Thyroid gland (tissue), 4 donors: ENCODE measurements at regions of chr13 and their contacts with region 1.

Region 1: DNA sequence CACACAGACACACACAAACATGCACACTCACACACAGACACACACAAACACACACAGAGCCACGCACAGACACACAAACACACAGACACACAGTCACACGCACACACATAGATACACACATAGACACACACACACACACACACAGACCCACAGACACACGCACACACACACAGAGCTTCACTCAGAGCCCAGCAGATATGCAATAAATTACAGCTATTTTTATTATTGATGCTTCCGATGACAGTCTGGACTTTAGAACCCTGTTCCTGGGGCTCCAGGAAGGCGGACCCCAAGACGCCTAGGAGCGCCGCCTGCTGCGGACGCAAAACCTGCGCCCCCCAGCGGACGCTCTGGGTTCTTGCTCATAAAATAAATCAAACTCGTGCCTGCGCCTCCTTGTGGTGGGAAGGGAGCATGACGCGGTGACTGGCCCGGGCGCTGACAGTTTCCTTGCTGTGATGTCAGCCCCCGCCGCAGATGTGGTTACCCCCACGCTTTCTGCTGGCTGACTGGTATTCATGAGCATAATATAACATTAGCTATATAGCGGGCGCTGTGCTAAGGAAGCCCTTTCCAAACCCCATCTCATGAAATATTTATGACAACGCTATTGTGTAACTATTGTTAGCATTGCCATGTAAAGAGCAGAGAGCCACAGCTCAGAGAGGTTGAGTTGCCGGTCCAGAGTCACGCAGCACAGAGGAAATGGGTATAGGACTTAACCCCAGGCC is 64.4 kb upstream of the TM9SF2 start:
- DNase-seq: peak; percentile 75 to 84
- H3K4me3 ChIP-seq: no peak overlapping the region
- H3K27ac ChIP-seq: no peak overlapping the region
- H3K4me1 ChIP-seq: no peaks in the 10 kb centered on the region
- H3K27me3 ChIP-seq: no peaks in the 10 kb centered on the region
- CTCF ChIP-seq: peak; percentile 98 to 100 (median 99)
- POLR2A ChIP-seq: no peak

Region 2: GRCh38 chr13:99176309-99177276 is 260.3 kb before region 1 on chr13:
- intact Hi-C with region 1: loop called (anchors 5 kb)
- DNase-seq: peak; percentile 75 to 83
- H3K4me3 ChIP-seq: no peak overlapping the region
- H3K27ac ChIP-seq: no peak overlapping the region
- H3K4me1 ChIP-seq: no peaks in the 10 kb centered on the region
- H3K27me3 ChIP-seq: no peaks in the 10 kb centered on the region
- CTCF ChIP-seq: peak; percentile 82 to 92 (median 90)
- POLR2A ChIP-seq: no peak

Region 3: DNA sequence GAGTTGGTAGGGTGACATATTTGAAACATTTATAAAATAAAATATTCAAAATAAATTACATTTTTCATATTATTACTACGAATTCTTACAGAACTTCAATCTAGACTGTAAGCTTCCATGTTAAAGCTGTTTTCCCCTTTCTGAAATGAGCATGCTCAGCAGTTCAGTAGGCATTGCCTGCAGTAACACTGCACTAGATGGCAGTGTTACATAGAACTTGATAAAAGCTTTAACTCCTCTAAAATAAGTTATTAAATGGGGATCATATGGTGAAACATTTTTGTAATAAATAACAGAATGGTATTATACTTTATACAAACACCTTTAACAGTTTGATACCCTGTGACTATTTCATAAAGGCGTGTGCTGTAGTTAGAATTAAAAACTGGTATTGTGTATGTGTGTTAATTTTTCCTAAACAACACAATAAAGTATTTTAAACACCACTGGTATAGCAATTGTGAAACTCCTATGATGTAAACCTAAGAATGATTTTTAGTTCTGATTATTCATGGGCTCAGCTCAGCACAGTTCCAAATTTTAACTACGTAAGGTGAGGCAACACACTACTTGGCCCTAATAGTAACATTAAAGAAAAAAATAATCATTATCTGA is 167.1 kb before region 1 on chr13:
- intact Hi-C with region 1: loop called (anchors 5 kb)
- DNase-seq: no peak
- H3K4me3 ChIP-seq: no peak overlapping the region
- H3K27ac ChIP-seq: no peak overlapping the region
- H3K4me1 ChIP-seq: peaks cover 0 to 6% of the 10 kb centered on the region in 2 donors
- H3K27me3 ChIP-seq: no peaks in the 10 kb centered on the region
- CTCF ChIP-seq: peak in 4 of 6 experiments; percentile 56 to 81 (median 73)
- POLR2A ChIP-seq: no peak